ENCODE measurements at regions of chr1 and their contacts with region 1.

Region 1: DNA sequence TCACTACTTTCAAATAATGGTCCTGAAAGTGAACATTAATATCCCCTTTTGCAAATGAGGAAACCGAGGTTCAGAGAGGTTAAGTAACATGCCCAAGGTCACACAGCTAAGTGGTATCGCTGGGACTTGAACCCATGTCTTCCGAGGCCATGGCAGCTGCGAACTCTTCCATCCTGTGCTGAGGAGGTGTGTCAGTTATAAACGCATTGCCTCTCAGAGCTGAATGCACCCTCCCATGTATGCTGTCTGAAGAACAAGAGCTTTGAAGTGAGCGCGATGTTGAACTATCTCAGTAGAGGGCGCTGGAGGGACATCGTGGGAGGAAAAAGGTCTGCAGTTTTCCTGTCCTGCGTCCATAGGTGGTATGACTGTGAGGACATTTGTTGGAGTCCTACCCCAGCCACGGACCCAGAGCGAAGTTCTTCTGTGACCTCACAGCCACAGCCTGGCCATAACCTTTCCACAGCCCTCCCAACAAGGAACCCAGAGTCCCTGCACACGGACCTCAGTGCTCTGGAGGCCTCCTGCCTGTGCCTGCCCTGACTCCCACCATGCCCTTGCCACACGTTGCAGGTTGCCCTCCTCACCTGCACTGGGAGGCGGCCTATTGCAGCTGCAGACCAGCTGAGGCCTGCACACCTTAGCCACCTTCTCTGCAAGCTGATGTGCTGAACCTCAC is 7.5 kb downstream of the MYOC start:
- DNase-seq: peak; percentile 42 to 83
- ATAC-seq: peak; percentile 84 to 89
- H3K4me3 ChIP-seq: peak overlapping the region; percentile 1 to 22 (median 16)
- H3K27ac ChIP-seq: peak overlapping the region; percentile 62 to 79 (median 76)
- H3K4me1 ChIP-seq: peaks cover 13 to 15% of the 10 kb centered on the region in 2 donors
- H3K27me3 ChIP-seq: no peaks in the 10 kb centered on the region
- CTCF ChIP-seq: peak; percentile 51 to 87 (median 77)
- POLR2A ChIP-seq: no peak

Region 2: GRCh38 chr1:171422511-171422910 is 222.4 kb before region 1 on chr1:
- in situ Hi-C with region 1: no loop called
- intact Hi-C with region 1: no loop called
- DNase-seq: no peak
- ATAC-seq: no peak
- H3K4me3 ChIP-seq: no peak overlapping the region
- H3K27ac ChIP-seq: no peak overlapping the region
- H3K4me1 ChIP-seq: no peaks in the 10 kb centered on the region
- H3K27me3 ChIP-seq: no peaks in the 10 kb centered on the region
- CTCF ChIP-seq: no peak
- POLR2A ChIP-seq: no peak

Region 3: GRCh38 chr1:171506525-171507304 is 138.2 kb before region 1 on chr1:
- in situ Hi-C with region 1: no loop called
- intact Hi-C with region 1: no loop called
- DNase-seq: no peak
- ATAC-seq: no peak
- H3K4me3 ChIP-seq: no peak overlapping the region
- H3K27ac ChIP-seq: no peak overlapping the region
- H3K4me1 ChIP-seq: peaks cover 31 to 42% of the 10 kb centered on the region in 2 donors
- H3K27me3 ChIP-seq: no peaks in the 10 kb centered on the region
- CTCF ChIP-seq: no peak
- POLR2A ChIP-seq: no peak

Region 4: GRCh38 chr1:171715813-171716251 is 70.9 kb after region 1 on chr1:
- in situ Hi-C with region 1: no loop called
- intact Hi-C with region 1: loop called (anchors 1 kb)
- DNase-seq: no peak
- ATAC-seq: no peak
- H3K4me3 ChIP-seq: no peak overlapping the region
- H3K27ac ChIP-seq: peak overlapping the region in 3 of 4 donors; percentile 64 to 69 (median 65)
- H3K4me1 ChIP-seq: peaks cover 19 to 25% of the 10 kb centered on the region in 2 donors
- H3K27me3 ChIP-seq: no peaks in the 10 kb centered on the region
- CTCF ChIP-seq: peak in 4 of 5 experiments; percentile 17 to 43 (median 35)
- POLR2A ChIP-seq: no peak

Region 5: GRCh38 chr1:171781176-171781875 is 136.4 kb after region 1 on chr1 and contains the start of gene METTL13:
- in situ Hi-C with region 1: no loop called
- intact Hi-C with region 1: loop called (anchors 1 kb)
- DNase-seq: peak; percentile 98
- ATAC-seq: peak; percentile 98 to 99
- H3K4me3 ChIP-seq: peak within 1 kb of the TSS; percentile 75 to 92 (median 87)
- H3K27ac ChIP-seq: peak within 1 kb of the TSS; percentile 88 to 95 (median 90)
- H3K4me1 ChIP-seq: peaks cover 34 to 35% of the 10 kb centered on the region in 2 donors
- H3K27me3 ChIP-seq: no peaks in the 10 kb centered on the region
- CTCF ChIP-seq: peak in 1 of 5 experiments; percentile 18
- POLR2A ChIP-seq: peak; percentile 82 to 90
- total RNA-seq, gene METTL13: 18.6 to 32.8 (median 23.5) TPM

Region 6: GRCh38 chr1:171841050-171841940 is 196.4 kb after region 1 on chr1 and contains the start of gene DNM3:
- in situ Hi-C with region 1: no loop called
- intact Hi-C with region 1: loop called (anchors 5 kb)
- DNase-seq: peak; percentile 48 to 64
- ATAC-seq: peak; percentile 91 to 92
- H3K4me3 ChIP-seq: peak within 1 kb of the TSS; percentile 66 to 86 (median 79)
- H3K27ac ChIP-seq: peak within 1 kb of the TSS; percentile 64 to 77 (median 72)
- H3K4me1 ChIP-seq: peaks cover 0 to 11% of the 10 kb centered on the region in 2 donors
- H3K27me3 ChIP-seq: no peaks in the 10 kb centered on the region
- CTCF ChIP-seq: no peak
- POLR2A ChIP-seq: peak; percentile 30 to 64
- total RNA-seq, gene DNM3: 0.35 to 1.6 (median 1.1) TPM

Region 7: GRCh38 chr1:171984850-171985485 is 340.0 kb after region 1 on chr1:
- in situ Hi-C with region 1: loop called in 3 of 4 experiments (anchors 10 kb)
- intact Hi-C with region 1: loop called (anchors 2 kb)
- DNase-seq: no peak
- ATAC-seq: peak in 1 of 2 donors; percentile 39
- H3K4me3 ChIP-seq: no peak overlapping the region
- H3K27ac ChIP-seq: no peak overlapping the region
- H3K4me1 ChIP-seq: peaks cover 0 to 7% of the 10 kb centered on the region in 2 donors
- H3K27me3 ChIP-seq: no peaks in the 10 kb centered on the region
- CTCF ChIP-seq: peak; percentile 50 to 71 (median 65)
- POLR2A ChIP-seq: no peak

Measured in gastrocnemius medialis (tissue), 4 donors.